Caco-2 (cell line): ENCODE measurements at regions of chr20 and their contacts with region 1.

Region 1: DNA sequence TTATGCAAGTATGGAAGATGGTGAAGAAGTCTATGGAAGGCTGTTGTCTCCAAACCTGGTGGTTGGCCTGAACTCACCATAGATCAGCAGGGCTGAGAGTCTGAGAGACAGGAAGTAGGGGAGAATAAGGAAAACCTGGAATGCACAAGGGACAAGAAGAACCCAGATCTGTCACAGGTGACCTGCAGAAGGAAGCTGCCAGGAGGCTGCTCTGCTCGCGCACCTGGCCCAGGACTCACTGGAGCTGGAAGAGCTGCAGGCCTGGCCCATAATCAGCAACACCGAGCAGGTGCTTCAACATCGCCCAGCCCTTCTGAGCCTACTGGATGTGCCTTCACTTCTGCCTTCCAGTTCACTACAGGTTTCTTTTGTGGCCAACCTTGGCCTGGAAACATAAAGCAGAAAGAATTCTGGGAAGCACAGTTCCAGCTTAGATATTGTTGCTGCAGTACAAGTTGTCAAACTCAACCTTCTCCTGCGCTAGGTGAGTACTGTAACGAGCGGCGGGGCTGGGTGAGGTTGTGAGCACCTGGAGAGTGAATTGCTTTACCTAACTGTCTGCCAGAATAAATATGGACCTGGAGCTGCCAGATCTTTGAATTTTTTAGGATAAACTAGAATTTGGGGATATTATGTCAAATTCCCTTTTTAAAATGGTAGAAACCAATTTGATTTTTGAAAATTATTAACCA is 82.4 kb downstream of the CDH26 start:
- DNase-seq: peak in 1 of 2 experiments; percentile 53
- H3K4me3 ChIP-seq: no peak overlapping the region
- H3K4me3 Mint-ChIP-seq: peak overlapping the region; percentile 42
- H3K27ac Mint-ChIP-seq: peak overlapping the region; percentile 69
- H3K4me1 ChIP-seq: peaks cover 33% of the 10 kb centered on the region
- H3K4me1 Mint-ChIP-seq: peaks cover 49% of the 10 kb centered on the region
- H3K27me3 ChIP-seq: no peaks in the 10 kb centered on the region
- H3K27me3 Mint-ChIP-seq: no peaks in the 10 kb centered on the region
- CTCF ChIP-seq: no peak

Region 2: GRCh38 chr20:59782986-59783640 is 257.5 kb before region 1 on chr20:
- CTCF ChIA-PET with region 1: no interaction called
- POLR2A ChIA-PET with region 1: no interaction called
- intact Hi-C with region 1: no loop called
- DNase-seq: peak; percentile 86 to 88
- H3K4me3 ChIP-seq: no peak overlapping the region
- H3K4me3 Mint-ChIP-seq: no peak overlapping the region
- H3K27ac Mint-ChIP-seq: no peak overlapping the region
- H3K4me1 ChIP-seq: 0 out of 2 replicates have a peak, but pooled peaks cover 3% of the 10 kb centered on the region
- H3K4me1 Mint-ChIP-seq: peaks cover 7% of the 10 kb centered on the region
- H3K27me3 ChIP-seq: no peaks in the 10 kb centered on the region
- H3K27me3 Mint-ChIP-seq: peaks cover 8% of the 10 kb centered on the region
- CTCF ChIP-seq: peak; percentile 99 to 100

Region 3: GRCh38 chr20:60024801-60025200 is 15.8 kb before region 1 on chr20:
- CTCF ChIA-PET with region 1: no interaction called
- POLR2A ChIA-PET with region 1: no interaction called
- intact Hi-C with region 1: loop called (anchors 1 kb)
- DNase-seq: peak in 1 of 2 experiments; percentile 47
- H3K4me3 ChIP-seq: no peak overlapping the region
- H3K4me3 Mint-ChIP-seq: no peak overlapping the region
- H3K27ac Mint-ChIP-seq: no peak overlapping the region
- H3K4me1 ChIP-seq: peaks cover 28% of the 10 kb centered on the region
- H3K4me1 Mint-ChIP-seq: peaks cover 13% of the 10 kb centered on the region
- H3K27me3 ChIP-seq: no peaks in the 10 kb centered on the region
- H3K27me3 Mint-ChIP-seq: no peaks in the 10 kb centered on the region
- CTCF ChIP-seq: peak in 1 of 2 experiments; percentile 20

Region 4: GRCh38 chr20:60062811-60063451 is 22.3 kb after region 1 on chr20:
- CTCF ChIA-PET with region 1: no interaction called
- POLR2A ChIA-PET with region 1: no interaction called
- intact Hi-C with region 1: no loop called
- DNase-seq: peak in 1 of 2 experiments; percentile 31
- H3K4me3 ChIP-seq: no peak overlapping the region
- H3K4me3 Mint-ChIP-seq: no peak overlapping the region
- H3K27ac Mint-ChIP-seq: no peak overlapping the region
- H3K4me1 ChIP-seq: no peaks in the 10 kb centered on the region
- H3K4me1 Mint-ChIP-seq: no peaks in the 10 kb centered on the region
- H3K27me3 ChIP-seq: peaks cover 2% of the 10 kb centered on the region
- H3K27me3 Mint-ChIP-seq: peaks cover 19% of the 10 kb centered on the region
- CTCF ChIP-seq: no peak